MCF 10A (cell line): ENCODE measurements at regions of chr17 and their contacts with region 1.

Region 1: GRCh38 chr17:47663912-47664625 is 14.3 kb downstream of the KPNB1 start:
- DNase-seq: peak; percentile 64
- H3K4me3 Mint-ChIP-seq: no peak overlapping the region
- H3K27ac Mint-ChIP-seq: no peak overlapping the region
- H3K4me1 Mint-ChIP-seq: peaks cover 14% of the 10 kb centered on the region
- H3K27me3 Mint-ChIP-seq: no peaks in the 10 kb centered on the region
- CTCF ChIP-seq: peak; percentile 47

Region 2: GRCh38 chr17:47649153-47649971 is 14.7 kb before region 1 on chr17 and contains the start of gene KPNB1:
- CTCF ChIA-PET with region 1: interaction called, 28 read pairs
- POLR2A ChIA-PET with region 1: interaction called, 25 read pairs
- intact Hi-C with region 1: no loop called
- DNase-seq: peak; percentile 100
- H3K4me3 Mint-ChIP-seq: peak within 1 kb of the TSS; percentile 88
- H3K27ac Mint-ChIP-seq: peak within 1 kb of the TSS; percentile 91
- H3K4me1 Mint-ChIP-seq: peaks cover 26% of the 10 kb centered on the region
- H3K27me3 Mint-ChIP-seq: no peaks in the 10 kb centered on the region
- CTCF ChIP-seq: no peak
- total RNA-seq, gene KPNB1: 522 and 609 TPM in 2 replicates

Region 3: DNA sequence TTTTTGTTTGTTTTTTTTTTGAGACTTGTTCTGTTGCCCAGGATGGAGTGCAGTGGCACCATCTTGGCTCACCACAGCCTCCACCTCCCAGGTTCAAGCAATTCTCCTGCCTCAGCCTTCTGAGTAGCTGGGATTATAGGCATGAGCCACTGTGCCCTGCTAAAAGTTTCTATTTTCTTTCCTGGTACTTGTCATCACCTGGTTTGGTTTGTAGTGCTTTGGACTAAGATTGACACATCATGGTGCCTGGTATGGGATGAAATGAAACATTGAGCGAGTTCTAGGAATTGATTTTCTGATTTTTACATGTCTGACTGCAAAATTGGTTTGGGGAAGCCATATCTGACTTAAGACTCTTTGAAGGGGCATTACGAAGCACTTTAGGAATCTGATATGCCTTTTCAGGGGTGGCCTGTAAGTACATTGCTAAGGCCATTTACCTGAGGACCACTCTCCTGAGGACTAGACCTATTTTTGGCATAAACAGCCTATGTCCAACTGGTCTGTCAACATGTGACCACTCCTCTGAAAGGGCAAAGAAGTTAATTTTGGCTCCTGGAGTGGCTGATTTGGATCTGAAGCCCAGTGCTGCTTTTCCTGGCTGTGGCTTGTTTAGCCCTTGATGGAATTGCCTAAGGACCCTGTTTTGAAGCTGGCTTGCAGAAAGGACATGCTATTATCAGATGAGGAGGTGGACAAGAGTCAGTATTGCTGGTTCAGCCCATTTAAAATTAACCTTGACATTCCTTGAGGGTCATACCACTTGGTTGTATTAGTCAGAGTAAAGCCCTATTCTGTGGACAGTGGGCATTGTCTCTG is 11.5 kb after region 1 on chr17:
- CTCF ChIA-PET with region 1: interaction called, 25 read pairs
- POLR2A ChIA-PET with region 1: interaction called, 9 read pairs
- intact Hi-C with region 1: no loop called
- DNase-seq: no peak
- H3K4me3 Mint-ChIP-seq: no peak overlapping the region
- H3K27ac Mint-ChIP-seq: no peak overlapping the region
- H3K4me1 Mint-ChIP-seq: no peaks in the 10 kb centered on the region
- H3K27me3 Mint-ChIP-seq: no peaks in the 10 kb centered on the region
- CTCF ChIP-seq: no peak

Region 4: DNA sequence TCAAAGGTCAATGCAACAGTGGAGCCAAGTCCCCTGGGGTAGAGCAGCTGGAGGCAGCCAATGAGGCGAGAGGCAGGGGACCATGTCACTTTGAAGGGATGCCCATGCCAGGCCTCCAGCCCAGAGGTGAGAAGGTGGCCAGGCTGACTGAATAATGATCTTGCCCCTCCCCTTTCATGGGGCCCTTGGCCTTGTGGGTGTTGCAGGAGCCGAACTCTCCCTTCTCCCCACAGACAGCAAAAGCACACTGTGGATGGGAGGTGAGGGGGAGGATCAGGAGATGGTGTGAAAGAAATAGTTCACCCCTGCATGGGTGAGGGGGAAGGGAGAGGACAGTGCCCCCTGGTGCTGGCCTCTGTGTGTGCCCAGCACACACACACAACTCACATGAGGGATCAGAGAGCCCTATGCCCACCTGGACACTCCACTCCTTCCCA is 53.2 kb after region 1 on chr17:
- CTCF ChIA-PET with region 1: no interaction called
- POLR2A ChIA-PET with region 1: no interaction called
- intact Hi-C with region 1: no loop called
- DNase-seq: no peak
- H3K4me3 Mint-ChIP-seq: no peak overlapping the region
- H3K27ac Mint-ChIP-seq: no peak overlapping the region
- H3K4me1 Mint-ChIP-seq: peaks cover 22% of the 10 kb centered on the region
- H3K27me3 Mint-ChIP-seq: peaks cover 98% of the 10 kb centered on the region
- CTCF ChIP-seq: no peak

Region 5: DNA sequence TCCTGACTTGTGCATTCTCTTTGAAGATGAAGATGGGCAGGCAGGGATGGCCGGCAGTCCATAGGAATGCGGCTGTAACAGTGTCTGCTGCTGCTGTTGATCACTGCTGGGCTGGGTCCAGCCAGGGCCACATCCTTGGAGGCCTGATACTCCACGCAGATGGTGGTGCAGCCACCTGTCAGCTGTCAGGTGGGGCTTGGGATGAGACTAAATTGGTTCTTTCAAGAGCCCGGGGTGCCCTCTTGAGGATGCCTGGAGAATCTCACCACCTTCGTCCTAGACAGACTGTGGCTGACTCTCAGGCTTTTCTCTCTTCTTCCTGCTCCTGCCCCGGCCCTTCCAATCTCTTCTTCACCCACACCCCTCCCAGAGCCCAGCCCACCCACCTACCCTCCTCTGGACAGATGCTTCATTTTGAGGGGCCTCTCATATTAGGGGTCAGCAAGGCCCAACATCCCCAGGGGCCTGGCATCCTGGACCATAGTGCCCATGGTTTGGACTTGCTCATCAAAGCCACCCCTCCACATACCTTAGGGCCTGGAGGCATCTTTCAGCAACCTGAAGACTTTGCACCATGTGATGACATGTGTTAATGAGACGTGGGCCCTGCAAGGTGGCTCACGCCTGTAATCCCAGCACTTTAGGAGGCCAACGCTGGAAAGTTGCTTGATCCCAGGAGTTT is 138.4 kb after region 1 on chr17:
- CTCF ChIA-PET with region 1: interaction called, 12 read pairs
- POLR2A ChIA-PET with region 1: interaction called, 3 read pairs
- intact Hi-C with region 1: no loop called
- DNase-seq: peak; percentile 67
- H3K4me3 Mint-ChIP-seq: no peak overlapping the region
- H3K27ac Mint-ChIP-seq: no peak overlapping the region
- H3K4me1 Mint-ChIP-seq: no peaks in the 10 kb centered on the region
- H3K27me3 Mint-ChIP-seq: peaks cover 8% of the 10 kb centered on the region
- CTCF ChIP-seq: peak; percentile 70

Region 6: GRCh38 chr17:47840740-47841603 is 176.9 kb after region 1 on chr17 and contains the start of gene SCRN2:
- CTCF ChIA-PET with region 1: no interaction called
- POLR2A ChIA-PET with region 1: no interaction called
- intact Hi-C with region 1: no loop called
- DNase-seq: peak; percentile 88
- H3K4me3 Mint-ChIP-seq: peak within 1 kb of the TSS; percentile 81
- H3K27ac Mint-ChIP-seq: peak within 1 kb of the TSS; percentile 65
- H3K4me1 Mint-ChIP-seq: peaks cover 7% of the 10 kb centered on the region
- H3K27me3 Mint-ChIP-seq: no peaks in the 10 kb centered on the region
- CTCF ChIP-seq: peak; percentile 99
- total RNA-seq, gene SCRN2: 15.7 and 16.2 TPM in 2 replicates